Activated CD4-positive, alpha-beta memory T cell treated with anti-CD3 and anti-CD28 coated beads for 36 hours (primary cell): ENCODE measurements at regions of chr16 and their contacts with region 1.

Region 1: DNA sequence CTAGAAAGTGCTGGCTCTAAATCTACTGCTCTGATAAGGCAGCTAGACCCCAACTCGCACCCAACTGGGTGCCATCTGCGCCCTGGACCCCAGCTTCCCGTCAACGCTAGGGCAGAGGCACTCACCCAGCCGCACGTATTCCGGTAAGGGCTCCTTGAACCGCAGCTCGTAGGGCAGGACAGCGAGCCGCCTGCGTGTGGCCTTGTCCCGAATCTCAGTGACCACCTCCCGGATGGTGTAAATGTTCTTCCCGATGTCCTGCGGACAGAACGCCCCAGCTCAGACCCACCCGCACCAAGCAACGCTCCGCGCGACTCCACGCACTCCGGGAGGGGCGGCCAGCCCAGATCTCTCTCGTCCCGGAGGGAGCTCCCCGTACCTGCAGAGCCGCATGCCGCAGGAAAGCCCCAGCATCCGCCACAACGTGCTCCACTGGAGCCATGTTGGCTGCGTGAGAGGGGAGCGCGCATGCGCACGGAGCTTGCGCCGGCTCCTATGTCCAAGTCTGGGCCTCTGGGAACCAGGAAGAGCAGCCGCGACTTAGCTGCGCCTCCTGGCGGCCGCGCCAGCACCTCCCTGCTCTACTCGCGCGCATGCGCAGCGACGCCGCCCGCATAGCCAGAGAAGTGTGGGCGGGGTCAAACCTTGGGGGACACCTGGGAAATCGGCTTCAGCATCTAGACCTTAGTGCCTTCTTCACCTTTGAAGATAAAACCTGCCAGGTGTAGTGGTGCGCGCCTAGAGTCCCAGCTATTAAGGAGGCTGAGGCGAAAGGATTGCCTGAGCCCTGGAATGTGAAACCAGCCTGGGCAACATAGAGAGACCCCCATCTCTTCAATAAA is at the start of gene NOB1:
- DNase-seq: peak; percentile 98
- H3K4me3 Mint-ChIP-seq: peak within 1 kb of the TSS; percentile 100
- H3K27ac Mint-ChIP-seq: peak within 1 kb of the TSS; percentile 98
- H3K4me1 Mint-ChIP-seq: peaks cover 23% of the 10 kb centered on the region
- H3K27me3 Mint-ChIP-seq: no peaks in the 10 kb centered on the region
- total RNA-seq, gene NOB1: 92.4 to 95.2 TPM

Region 2: DNA sequence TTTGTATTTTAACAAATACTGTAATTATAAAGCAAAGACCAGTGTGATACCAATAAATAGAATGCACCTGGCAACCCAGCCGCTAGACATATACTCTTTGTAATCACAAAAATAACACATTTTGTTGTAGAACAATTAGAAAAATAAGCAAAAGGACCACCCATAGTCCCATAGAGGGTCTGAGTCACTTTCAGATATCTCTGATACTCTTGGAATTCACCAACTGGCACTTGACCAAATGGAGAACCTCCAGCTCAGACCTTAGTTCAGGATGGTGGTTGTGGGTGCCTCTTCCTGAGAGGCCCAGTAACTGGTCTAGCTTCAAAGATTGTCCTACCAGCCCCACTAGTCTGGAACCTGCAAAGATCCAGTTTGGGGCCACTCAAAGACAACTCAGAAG is 368.1 kb before region 1 on chr16:
- CTCF ChIA-PET with region 1: no interaction called
- POLR2A ChIA-PET with region 1: interaction called, 10 read pairs
- intact Hi-C with region 1: no loop called
- DNase-seq: no peak
- H3K4me3 Mint-ChIP-seq: peak overlapping the region; percentile 93
- H3K27ac Mint-ChIP-seq: no peak overlapping the region
- H3K4me1 Mint-ChIP-seq: peaks cover 28% of the 10 kb centered on the region
- H3K27me3 Mint-ChIP-seq: no peaks in the 10 kb centered on the region

Region 3: DNA sequence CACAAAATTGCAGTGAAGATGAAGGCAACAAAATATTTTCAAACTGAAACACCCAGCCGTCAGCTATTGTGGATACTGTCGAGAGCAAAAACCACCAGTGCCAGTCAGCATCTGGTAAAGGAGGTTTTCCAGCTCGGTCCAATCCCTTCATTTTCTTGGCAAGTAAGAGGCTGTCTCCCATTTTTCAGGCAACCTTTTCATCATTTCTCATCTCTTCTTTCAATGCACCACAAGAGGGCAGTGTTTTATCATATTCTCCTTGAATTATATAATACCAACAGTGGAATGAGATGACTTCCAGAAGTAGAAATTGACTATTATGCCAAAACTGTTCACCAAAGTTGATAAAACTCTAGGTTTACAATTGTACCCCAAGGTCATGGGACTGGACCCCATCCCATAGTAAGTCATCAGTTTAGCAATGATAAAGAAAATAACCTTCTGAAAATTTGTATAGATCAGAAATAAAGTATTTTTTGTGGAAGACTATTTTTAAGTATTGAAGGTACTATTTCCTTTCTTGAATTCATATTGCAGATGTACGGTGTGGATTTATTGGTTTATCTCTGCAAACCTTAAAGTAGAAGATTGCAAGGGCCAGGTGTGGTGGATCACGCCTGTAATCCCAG is 45.1 kb before region 1 on chr16:
- CTCF ChIA-PET with region 1: interaction called, 64 read pairs
- POLR2A ChIA-PET with region 1: no interaction called
- intact Hi-C with region 1: loop called (anchors 1 kb)
- DNase-seq: no peak
- H3K4me3 Mint-ChIP-seq: no peak overlapping the region
- H3K27ac Mint-ChIP-seq: no peak overlapping the region
- H3K4me1 Mint-ChIP-seq: peaks cover 7% of the 10 kb centered on the region
- H3K27me3 Mint-ChIP-seq: no peaks in the 10 kb centered on the region

Region 4: GRCh38 chr16:69720822-69721430 is 33.8 kb before region 1 on chr16:
- CTCF ChIA-PET with region 1: interaction called, 54 read pairs
- POLR2A ChIA-PET with region 1: interaction called, 15 read pairs
- intact Hi-C with region 1: loop called (anchors 1 kb)
- DNase-seq: no peak
- H3K4me3 Mint-ChIP-seq: no peak overlapping the region
- H3K27ac Mint-ChIP-seq: no peak overlapping the region
- H3K4me1 Mint-ChIP-seq: peaks cover 5% of the 10 kb centered on the region
- H3K27me3 Mint-ChIP-seq: no peaks in the 10 kb centered on the region

Region 5: GRCh38 chr16:69726296-69727060 is 28.2 kb before region 1 on chr16 and contains the start of gene NQO1:
- CTCF ChIA-PET with region 1: interaction called, 54 read pairs
- POLR2A ChIA-PET with region 1: interaction called, 15 read pairs
- intact Hi-C with region 1: loop called (anchors 1 kb)
- DNase-seq: peak; percentile 96
- H3K4me3 Mint-ChIP-seq: peak within 1 kb of the TSS; percentile 87
- H3K27ac Mint-ChIP-seq: peak within 1 kb of the TSS; percentile 86
- H3K4me1 Mint-ChIP-seq: peaks cover 17% of the 10 kb centered on the region
- H3K27me3 Mint-ChIP-seq: no peaks in the 10 kb centered on the region
- total RNA-seq, gene NQO1: 14.9 to 18.2 TPM

Region 6: GRCh38 chr16:69773260-69773947 is 18.7 kb after region 1 on chr16:
- CTCF ChIA-PET with region 1: interaction called, 21 read pairs
- POLR2A ChIA-PET with region 1: no interaction called
- intact Hi-C with region 1: no loop called
- DNase-seq: no peak
- H3K4me3 Mint-ChIP-seq: no peak overlapping the region
- H3K27ac Mint-ChIP-seq: peak overlapping the region; percentile 6
- H3K4me1 Mint-ChIP-seq: peaks cover 36% of the 10 kb centered on the region
- H3K27me3 Mint-ChIP-seq: no peaks in the 10 kb centered on the region

Region 7: GRCh38 chr16:69848637-69849545 is 94.2 kb after region 1 on chr16:
- CTCF ChIA-PET with region 1: no interaction called
- POLR2A ChIA-PET with region 1: no interaction called
- intact Hi-C with region 1: no loop called
- DNase-seq: no peak
- H3K4me3 Mint-ChIP-seq: no peak overlapping the region
- H3K27ac Mint-ChIP-seq: no peak overlapping the region
- H3K4me1 Mint-ChIP-seq: no peaks in the 10 kb centered on the region
- H3K27me3 Mint-ChIP-seq: no peaks in the 10 kb centered on the region